ENCODE measurements at regions of chr14 and their contacts with region 1.

Region 1: DNA sequence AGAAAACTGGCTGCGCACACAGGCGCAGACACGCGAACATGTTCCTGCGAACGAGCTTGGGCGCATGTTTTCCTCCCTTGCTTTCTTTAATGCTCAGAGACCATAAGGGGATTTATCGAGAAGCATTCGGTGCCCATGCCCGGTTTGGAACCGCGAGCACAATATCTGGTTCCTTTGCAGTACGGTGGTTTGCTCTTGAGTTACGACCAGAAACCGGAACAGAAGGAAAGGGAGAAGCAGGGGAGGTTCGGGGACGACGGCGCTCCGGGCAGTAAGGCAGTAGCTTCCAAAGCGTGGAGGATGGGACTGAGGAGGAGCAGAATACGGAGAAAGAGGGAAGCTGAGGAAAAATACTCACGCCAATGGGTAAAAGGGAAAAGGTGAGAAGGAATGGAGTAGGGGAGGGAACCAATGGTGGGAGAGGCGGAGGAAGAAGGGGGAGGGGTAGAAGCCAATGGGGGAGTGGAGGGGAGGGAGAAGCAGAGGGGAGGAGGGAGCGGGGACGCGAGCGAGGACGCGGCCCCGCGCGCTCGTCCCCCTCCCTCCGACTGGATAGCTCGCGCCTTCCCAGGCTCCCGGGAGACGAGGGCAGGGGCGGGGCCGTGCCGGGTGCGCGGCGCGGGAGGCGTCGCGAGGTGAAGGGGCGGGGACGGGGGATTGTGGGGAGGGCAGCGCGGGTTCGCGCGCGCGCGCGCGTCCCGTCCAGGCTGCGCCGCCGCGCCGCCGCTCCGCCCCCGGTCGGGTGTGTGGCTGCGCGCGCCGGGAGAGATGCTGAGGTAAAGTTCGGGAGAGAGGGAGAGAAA is 625 bp upstream of the ARHGAP5 start:
- DNase-seq: peak; percentile 61 to 84 (median 76)
- ATAC-seq: peak; percentile 77
- H3K4me3 ChIP-seq: peak overlapping the region; percentile 99
- H3K4me3 Mint-ChIP-seq: peak overlapping the region; percentile 85 to 100 (median 99)
- H3K27ac ChIP-seq: peak overlapping the region; percentile 71
- H3K27ac Mint-ChIP-seq: peak overlapping the region; percentile 88 to 99 (median 96)
- H3K4me1 ChIP-seq: peaks cover 0 to 4% of the 10 kb centered on the region in 2 donors
- H3K4me1 Mint-ChIP-seq: peaks cover 24 to 51% (median 42%) of the 10 kb centered on the region in 7 donors
- H3K27me3 ChIP-seq: peaks cover 0 to 6% of the 10 kb centered on the region in 2 donors
- H3K27me3 Mint-ChIP-seq: peaks cover 0 to 21% (median 0%) of the 10 kb centered on the region in 5 donors

Region 2: DNA sequence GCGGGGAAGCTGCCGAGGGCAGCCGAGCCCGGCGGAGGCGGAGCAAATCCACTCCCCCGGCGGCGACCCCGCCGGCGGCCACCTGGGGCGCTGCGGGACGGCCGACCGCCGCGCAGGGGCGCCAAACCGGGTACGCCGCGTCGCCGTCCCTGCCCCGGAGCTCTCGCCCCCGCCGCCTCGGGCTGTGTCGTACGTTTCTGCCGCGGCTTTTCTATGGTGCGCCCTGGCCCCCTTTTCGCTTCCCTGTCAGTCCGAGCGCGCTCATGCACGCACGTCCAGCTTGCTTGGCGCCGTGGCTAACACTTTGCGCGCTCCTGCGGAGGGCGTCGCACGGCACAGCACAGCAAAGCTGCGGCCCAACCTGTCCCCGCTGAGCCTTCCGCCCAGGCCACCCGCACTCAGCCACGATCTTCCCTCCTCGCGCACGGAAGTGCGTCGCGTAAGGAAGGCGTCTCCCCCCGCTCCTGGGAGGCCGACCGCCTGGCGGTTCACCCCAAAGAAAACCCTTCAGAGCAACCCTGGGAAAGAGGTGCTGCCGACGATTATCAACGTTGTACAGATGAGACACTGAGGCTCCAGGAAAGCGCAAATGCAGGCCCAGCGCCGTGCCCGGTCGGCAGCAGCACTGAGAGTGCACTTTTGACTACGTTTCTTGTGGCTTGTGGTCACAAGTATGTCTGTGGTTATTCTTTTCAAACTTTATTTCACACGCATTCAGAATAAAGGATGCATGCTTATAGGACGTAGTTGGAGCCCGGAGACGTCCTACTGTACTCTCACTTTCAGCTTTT is 868.5 kb before region 1 on chr14 and contains the start of gene HECTD1:
- CTCF ChIA-PET with region 1: no interaction called
- POLR2A ChIA-PET with region 1: no interaction called
- intact Hi-C with region 1: loop called in 1 of 2 experiments (anchors 2 kb)
- DNase-seq: peak in 8 of 9 donors; percentile 89 to 94 (median 92)
- ATAC-seq: peak; percentile 83
- H3K4me3 ChIP-seq: peak within 1 kb of the TSS; percentile 70
- H3K4me3 Mint-ChIP-seq: peak within 1 kb of the TSS; percentile 93 to 98 (median 96)
- H3K27ac ChIP-seq: peak within 1 kb of the TSS; percentile 100
- H3K27ac Mint-ChIP-seq: peak within 1 kb of the TSS; percentile 99 to 100 (median 99)
- H3K4me1 ChIP-seq: peaks cover 30 to 33% of the 10 kb centered on the region in 2 donors
- H3K4me1 Mint-ChIP-seq: peaks cover 33 to 68% (median 62%) of the 10 kb centered on the region in 7 donors
- H3K27me3 ChIP-seq: no peaks in the 10 kb centered on the region
- H3K27me3 Mint-ChIP-seq: no peaks in the 10 kb centered on the region
- total RNA-seq, gene HECTD1: 115 to 163 (median 158) TPM

Region 3: GRCh38 chr14:31561155-31561846 is 515.2 kb before region 1 on chr14 and contains the start of gene NUBPL:
- CTCF ChIA-PET with region 1: no interaction called
- POLR2A ChIA-PET with region 1: interaction called, 4 read pairs
- intact Hi-C with region 1: loop called (anchors 1 to 5 kb)
- DNase-seq: peak; percentile 96 to 98 (median 97)
- ATAC-seq: peak; percentile 95
- H3K4me3 ChIP-seq: peak within 1 kb of the TSS; percentile 90
- H3K4me3 Mint-ChIP-seq: peak within 1 kb of the TSS; percentile 88 to 98 (median 96)
- H3K27ac ChIP-seq: peak within 1 kb of the TSS; percentile 81
- H3K27ac Mint-ChIP-seq: peak within 1 kb of the TSS; percentile 95 to 100 (median 99)
- H3K4me1 ChIP-seq: peaks cover 0 to 5% of the 10 kb centered on the region in 2 donors
- H3K4me1 Mint-ChIP-seq: peaks cover 24 to 44% (median 38%) of the 10 kb centered on the region in 7 donors
- H3K27me3 ChIP-seq: no peaks in the 10 kb centered on the region
- H3K27me3 Mint-ChIP-seq: peaks cover 0 to 11% (median 5%) of the 10 kb centered on the region in 5 donors
- total RNA-seq, gene NUBPL: 6.1 to 11.7 (median 8.3) TPM

Region 4: GRCh38 chr14:32087173-32087861 is 10.8 kb after region 1 on chr14:
- CTCF ChIA-PET with region 1: interaction called, 5 read pairs
- POLR2A ChIA-PET with region 1: interaction called, 3 read pairs
- intact Hi-C with region 1: loop called (anchors 1 kb)
- DNase-seq: no peak
- ATAC-seq: no peak
- H3K4me3 ChIP-seq: no peak overlapping the region
- H3K4me3 Mint-ChIP-seq: no peak overlapping the region
- H3K27ac ChIP-seq: no peak overlapping the region
- H3K27ac Mint-ChIP-seq: no peak overlapping the region
- H3K4me1 ChIP-seq: peaks cover 0 to 4% of the 10 kb centered on the region in 2 donors
- H3K4me1 Mint-ChIP-seq: peaks cover 9 to 65% (median 40%) of the 10 kb centered on the region in 7 donors
- H3K27me3 ChIP-seq: no peaks in the 10 kb centered on the region
- H3K27me3 Mint-ChIP-seq: no peaks in the 10 kb centered on the region

Region 5: DNA sequence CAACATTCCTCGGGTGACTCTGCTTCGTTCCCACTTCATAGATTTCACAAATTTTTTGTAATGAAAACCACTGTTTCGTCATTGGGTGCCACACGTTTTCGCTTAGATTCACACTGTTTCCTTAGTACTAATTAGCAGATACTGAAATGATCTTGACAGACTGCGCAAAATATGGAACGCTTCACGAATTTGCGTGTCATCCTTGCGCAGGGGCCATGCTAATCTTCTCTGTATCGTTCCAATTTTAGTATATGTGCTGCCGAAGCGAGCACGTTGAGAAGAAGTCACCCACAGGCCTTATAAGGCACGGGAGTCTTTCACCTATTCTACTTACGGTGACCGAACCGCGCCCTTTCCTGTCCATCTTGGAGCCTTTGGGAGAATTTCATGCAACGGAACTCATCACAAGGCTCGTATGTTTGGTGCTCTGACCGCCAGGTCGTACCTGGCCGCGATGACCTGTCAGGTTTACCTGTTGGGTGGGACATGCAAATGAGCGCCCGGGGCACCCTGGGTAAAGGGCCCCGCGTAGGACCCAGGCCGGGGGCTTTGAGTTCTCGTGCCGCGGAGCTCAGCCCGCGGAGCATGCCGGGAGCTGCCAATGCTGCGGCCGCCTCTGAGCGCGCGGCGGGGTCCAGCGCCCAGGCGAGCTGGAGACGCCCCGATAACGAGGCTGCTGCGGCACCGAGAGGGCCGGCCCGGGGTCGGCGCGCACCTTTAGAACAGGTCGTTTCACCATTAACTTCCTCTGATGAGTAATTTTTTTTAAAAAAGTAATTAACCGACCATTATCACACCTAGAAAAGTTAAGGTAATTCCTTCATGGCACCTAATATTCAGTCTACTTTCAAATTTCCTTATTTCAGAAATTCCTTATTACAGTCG is 126.8 kb after region 1 on chr14 and contains the start of gene RNU6-8:
- CTCF ChIA-PET with region 1: interaction called, 6 read pairs
- POLR2A ChIA-PET with region 1: interaction called, 46 read pairs
- intact Hi-C with region 1: loop called (anchors 1 kb)
- DNase-seq: peak; percentile 79 to 96 (median 93)
- ATAC-seq: peak; percentile 91
- H3K4me3 ChIP-seq: peak within 1 kb of the TSS; percentile 85
- H3K4me3 Mint-ChIP-seq: peak within 1 kb of the TSS; percentile 91 to 98 (median 94)
- H3K27ac ChIP-seq: peak within 1 kb of the TSS; percentile 92
- H3K27ac Mint-ChIP-seq: peak within 1 kb of the TSS; percentile 96 to 100 (median 100)
- H3K4me1 ChIP-seq: peaks cover 0 to 9% of the 10 kb centered on the region in 2 donors
- H3K4me1 Mint-ChIP-seq: peaks cover 2 to 46% (median 21%) of the 10 kb centered on the region in 7 donors
- H3K27me3 ChIP-seq: no peaks in the 10 kb centered on the region
- H3K27me3 Mint-ChIP-seq: peaks cover 0 to 30% (median 0%) of the 10 kb centered on the region in 5 donors
- total RNA-seq, gene RNU6-8: not detected